K562 (cell line): ENCODE measurements at regions of chr10 and their contacts with region 1.

Region 1: GRCh38 chr10:69515699-69516259 is 57.4 kb downstream of the NEUROG3 start:
- DNase-seq: peak; percentile 82 to 87 (median 86)
- ATAC-seq: peak; percentile 99
- H3K4me3 ChIP-seq: no peak overlapping the region
- H3K27ac ChIP-seq: no peak overlapping the region
- H3K4me1 ChIP-seq: no peaks in the 10 kb centered on the region
- H3K27me3 ChIP-seq: peaks cover 0 to 28% of the 10 kb centered on the region in 2 experiments; a peak in 4 of 5 replicates
- CTCF ChIP-seq: peak; percentile 94 to 97 (median 95)
- EP300 ChIP-seq: no peak
- POLR2A ChIP-seq: no peak
- RAD21 ChIP-seq: peak; percentile 88 to 96

Region 2: GRCh38 chr10:69716711-69717560 is 201.2 kb after region 1 on chr10:
- CTCF ChIA-PET with region 1: interaction called, 4 read pairs
- POLR2A ChIA-PET with region 1: no interaction called
- in situ Hi-C with region 1: no loop called
- intact Hi-C with region 1: loop called (anchors 2 kb)
- DNase-seq: peak; percentile 72 to 82 (median 76)
- ATAC-seq: peak; percentile 95
- H3K4me3 ChIP-seq: no peak overlapping the region
- H3K27ac ChIP-seq: no peak overlapping the region
- H3K4me1 ChIP-seq: no peaks in the 10 kb centered on the region
- H3K27me3 ChIP-seq: peaks cover 3 to 36% of the 10 kb centered on the region in 2 experiments
- CTCF ChIP-seq: peak; percentile 86 to 91 (median 90)
- EP300 ChIP-seq: no peak
- POLR2A ChIP-seq: no peak
- RAD21 ChIP-seq: peak; percentile 68 to 85

Region 3: GRCh38 chr10:69786791-69787190 is 271.0 kb after region 1 on chr10:
- CTCF ChIA-PET with region 1: no interaction called
- POLR2A ChIA-PET with region 1: no interaction called
- in situ Hi-C with region 1: no loop called
- intact Hi-C with region 1: loop called (anchors 10 kb)
- DNase-seq: peak in 1 of 4 experiments; percentile 20
- ATAC-seq: peak; percentile 72
- H3K4me3 ChIP-seq: no peak overlapping the region
- H3K27ac ChIP-seq: no peak overlapping the region
- H3K4me1 ChIP-seq: no peaks in the 10 kb centered on the region
- H3K27me3 ChIP-seq: peaks cover 0 to 17% of the 10 kb centered on the region in 2 experiments; a peak in 1 of 5 replicates
- CTCF ChIP-seq: peak; percentile 36 to 54 (median 36); a peak in 3 of 6 replicates
- EP300 ChIP-seq: no peak
- POLR2A ChIP-seq: no peak
- RAD21 ChIP-seq: peak; percentile 40 to 59